Right cardiac atrium (tissue), 5 donors: ENCODE measurements at regions of chr18 and their contacts with region 1.

Region 1: GRCh38 chr18:45248240-45248903 is 366.9 kb upstream of the SLC14A2 start:
- DNase-seq: peak; percentile 36 to 51 (median 42)
- ATAC-seq: peak; percentile 91 to 92
- H3K4me3 ChIP-seq: no peak overlapping the region
- H3K27ac ChIP-seq: peak overlapping the region; percentile 81
- H3K4me1 ChIP-seq: peaks cover 8% of the 10 kb centered on the region
- H3K27me3 ChIP-seq: no peaks in the 10 kb centered on the region

Region 2: GRCh38 chr18:45169610-45170009 is 78.8 kb before region 1 on chr18:
- intact Hi-C with region 1: loop called in 1 of 4 experiments (anchors 10 kb)
- DNase-seq: peak; percentile 31 to 70 (median 70)
- ATAC-seq: peak; percentile 79 to 86
- H3K4me3 ChIP-seq: no peak overlapping the region
- H3K27ac ChIP-seq: no peak overlapping the region
- H3K4me1 ChIP-seq: no peaks in the 10 kb centered on the region
- H3K27me3 ChIP-seq: no peaks in the 10 kb centered on the region

Region 3: GRCh38 chr18:45324495-45325113 is 76.2 kb after region 1 on chr18:
- intact Hi-C with region 1: loop called in 1 of 4 experiments (anchors 10 kb)
- DNase-seq: peak; percentile 83 to 89 (median 83)
- ATAC-seq: peak; percentile 85 to 88
- H3K4me3 ChIP-seq: no peak overlapping the region
- H3K27ac ChIP-seq: peak overlapping the region; percentile 39
- H3K4me1 ChIP-seq: peaks cover 6% of the 10 kb centered on the region
- H3K27me3 ChIP-seq: no peaks in the 10 kb centered on the region